Activated B cell treated with CpG ODN at 0.5 μM for 24 hours (primary cell): ENCODE measurements at regions of chr22 and their contacts with region 1.

Region 1: GRCh38 chr22:20130739-20131596 is 636 bp upstream of the ZDHHC8 start:
- DNase-seq: peak; percentile 75
- ATAC-seq: peak; percentile 83
- H3K4me3 Mint-ChIP-seq: peak overlapping the region; percentile 70
- H3K27ac Mint-ChIP-seq: no peak overlapping the region
- H3K4me1 Mint-ChIP-seq: peaks cover 34% of the 10 kb centered on the region
- H3K27me3 Mint-ChIP-seq: no peaks in the 10 kb centered on the region
- CTCF ChIP-seq: no peak

Region 2: GRCh38 chr22:19970479-19971275 is 160.3 kb before region 1 on chr22:
- CTCF ChIA-PET with region 1: interaction called, 4 read pairs
- POLR2A ChIA-PET with region 1: no interaction called
- intact Hi-C with region 1: loop called (anchors 1 kb)
- DNase-seq: peak; percentile 74
- ATAC-seq: peak; percentile 87
- H3K4me3 Mint-ChIP-seq: no peak overlapping the region
- H3K27ac Mint-ChIP-seq: no peak overlapping the region
- H3K4me1 Mint-ChIP-seq: peaks cover 9% of the 10 kb centered on the region
- H3K27me3 Mint-ChIP-seq: no peaks in the 10 kb centered on the region
- CTCF ChIP-seq: peak; percentile 43

Region 3: DNA sequence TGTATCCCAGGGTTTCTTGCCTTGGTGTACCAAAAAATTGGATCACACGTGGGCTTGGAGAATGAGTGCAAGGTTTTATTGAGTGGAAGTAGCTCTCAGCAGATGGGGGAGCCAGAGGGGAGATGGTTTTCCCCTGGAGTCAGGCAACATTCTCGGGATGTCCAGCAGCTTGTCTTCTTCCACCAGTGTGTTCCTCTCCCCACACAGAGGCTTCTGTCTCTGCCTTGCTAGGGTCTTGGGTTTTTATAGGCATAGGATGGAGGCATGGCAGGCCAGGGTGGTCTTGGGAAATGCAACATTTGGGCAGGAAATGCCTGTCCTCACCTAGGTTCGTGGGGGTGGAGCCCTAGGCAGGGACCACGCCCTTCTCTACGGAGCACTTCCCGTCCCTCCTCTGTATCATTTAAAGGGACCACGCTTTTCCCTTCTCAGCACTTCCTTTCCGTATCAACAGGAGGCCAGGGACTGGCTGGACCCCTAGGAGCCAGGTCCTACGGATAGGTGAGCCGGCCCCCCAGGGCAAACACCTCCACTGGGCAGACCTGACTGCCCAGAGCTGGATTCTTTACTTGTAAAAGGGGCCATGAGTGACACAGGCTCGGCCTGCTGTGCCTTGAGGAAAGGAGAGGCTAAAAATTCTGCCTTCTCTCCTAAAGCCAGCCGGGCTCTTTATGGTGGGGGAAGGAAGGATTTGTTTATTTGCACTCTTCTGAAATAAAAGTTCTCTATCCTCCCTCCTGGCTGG is 75.2 kb after region 1 on chr22:
- CTCF ChIA-PET with region 1: no interaction called
- POLR2A ChIA-PET with region 1: no interaction called
- intact Hi-C with region 1: loop called (anchors 2 kb)
- DNase-seq: peak; percentile 50
- ATAC-seq: peak; percentile 94
- H3K4me3 Mint-ChIP-seq: peak overlapping the region; percentile 89
- H3K27ac Mint-ChIP-seq: peak overlapping the region; percentile 89
- H3K4me1 Mint-ChIP-seq: peaks cover 23% of the 10 kb centered on the region
- H3K27me3 Mint-ChIP-seq: peaks cover 5% of the 10 kb centered on the region
- CTCF ChIP-seq: no peak

Region 4: DNA sequence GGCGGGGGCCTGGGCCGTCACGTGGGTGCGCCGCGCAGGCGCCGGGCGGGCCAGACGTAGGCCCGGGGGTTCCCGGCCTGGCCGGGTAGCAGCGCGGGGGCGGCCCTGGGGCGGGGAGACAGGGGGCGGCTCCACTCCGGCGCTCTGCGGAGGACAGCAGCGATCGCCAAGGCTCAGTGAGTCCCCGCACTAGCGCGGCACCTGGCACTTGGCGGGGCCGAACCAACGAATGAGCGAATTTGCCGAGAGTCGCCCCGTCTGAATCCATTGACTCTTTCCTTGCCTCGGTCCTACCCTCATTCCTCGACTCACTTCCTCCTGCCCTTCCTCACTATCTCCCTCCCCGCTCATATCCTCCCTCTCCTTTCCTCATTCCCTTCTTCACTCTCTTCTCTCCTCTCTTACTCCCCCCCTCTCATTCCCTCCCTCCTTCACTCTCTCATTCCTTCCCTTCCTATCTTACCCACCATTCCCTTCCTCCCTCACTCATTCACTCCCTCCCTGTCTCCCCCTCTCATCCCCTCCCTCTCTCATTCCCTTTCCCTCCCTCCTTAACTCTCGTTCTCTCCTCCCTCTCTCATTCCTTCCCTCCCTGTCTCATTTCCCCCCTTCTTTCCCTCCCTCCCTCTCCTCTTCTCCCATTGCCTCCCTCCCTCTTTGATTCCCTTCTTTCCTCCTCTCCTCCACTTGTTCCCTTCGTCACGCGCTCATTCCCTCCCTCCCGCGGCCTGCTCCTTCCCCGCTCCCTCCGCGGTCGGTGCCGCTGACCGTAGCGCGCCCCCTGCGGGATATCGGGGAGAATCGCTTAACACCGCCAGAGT is 365.1 kb after region 1 on chr22:
- CTCF ChIA-PET with region 1: no interaction called
- POLR2A ChIA-PET with region 1: no interaction called
- intact Hi-C with region 1: loop called (anchors 5 kb)
- DNase-seq: peak; percentile 95
- ATAC-seq: peak; percentile 97
- H3K4me3 Mint-ChIP-seq: peak overlapping the region; percentile 92
- H3K27ac Mint-ChIP-seq: peak overlapping the region; percentile 93
- H3K4me1 Mint-ChIP-seq: peaks cover 28% of the 10 kb centered on the region
- H3K27me3 Mint-ChIP-seq: no peaks in the 10 kb centered on the region
- CTCF ChIP-seq: peak; percentile 68